Colonic mucosa (tissue), 4 donors: ENCODE measurements at regions of chr12 and their contacts with region 1.

Region 1: DNA sequence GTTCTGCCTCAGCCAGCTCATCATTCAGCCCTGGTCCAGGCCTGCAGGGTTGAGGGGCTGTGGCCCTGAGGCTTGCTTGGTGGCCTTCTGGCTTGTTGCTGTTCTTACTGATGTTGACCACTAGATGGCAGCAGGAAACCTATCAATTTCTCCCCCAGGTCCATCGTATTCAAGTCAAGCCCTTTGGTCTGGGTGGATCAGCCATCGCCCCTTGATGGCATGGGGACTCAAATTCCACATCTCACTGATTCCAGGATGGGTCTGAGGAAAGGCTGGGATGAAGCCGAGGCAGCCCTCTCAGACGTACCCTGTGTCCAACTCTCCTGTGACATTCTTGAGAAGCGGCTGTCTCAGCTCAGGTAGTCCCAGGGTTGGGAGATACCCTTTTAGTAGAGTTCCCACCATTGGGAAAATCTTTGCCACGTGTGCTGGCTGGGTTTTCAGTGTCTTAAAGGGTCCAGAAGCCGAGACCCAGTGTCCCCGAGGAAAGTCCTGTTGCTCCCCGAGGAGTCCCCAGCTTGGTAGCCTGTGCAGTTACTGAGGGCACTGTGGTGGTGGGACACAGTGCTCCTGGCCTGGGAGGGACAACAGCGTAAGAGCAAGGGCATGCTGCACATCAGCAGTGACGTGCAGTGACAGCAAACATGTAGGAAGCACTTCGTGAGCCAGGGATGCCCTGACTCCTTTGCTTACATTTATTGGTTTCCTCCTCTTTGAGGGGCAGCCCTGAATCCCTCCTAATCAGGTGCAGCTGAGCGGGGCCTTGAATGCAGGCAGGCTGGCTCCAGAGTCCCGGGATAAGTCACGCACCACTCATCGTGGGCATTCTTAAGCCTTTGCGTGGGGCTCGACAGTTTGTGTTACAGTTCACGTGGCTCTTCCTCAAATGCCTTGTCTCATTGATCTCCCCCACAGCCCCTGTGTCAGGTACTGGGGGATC is 58.6 kb downstream of the TSPAN9 start:
- DNase-seq: peak; percentile 31
- H3K4me3 ChIP-seq: no peak overlapping the region
- H3K27ac ChIP-seq: no peak overlapping the region
- H3K4me1 ChIP-seq: no peaks in the 10 kb centered on the region
- H3K27me3 ChIP-seq: no peaks in the 10 kb centered on the region
- CTCF ChIP-seq: peak; percentile 71

Region 2: DNA sequence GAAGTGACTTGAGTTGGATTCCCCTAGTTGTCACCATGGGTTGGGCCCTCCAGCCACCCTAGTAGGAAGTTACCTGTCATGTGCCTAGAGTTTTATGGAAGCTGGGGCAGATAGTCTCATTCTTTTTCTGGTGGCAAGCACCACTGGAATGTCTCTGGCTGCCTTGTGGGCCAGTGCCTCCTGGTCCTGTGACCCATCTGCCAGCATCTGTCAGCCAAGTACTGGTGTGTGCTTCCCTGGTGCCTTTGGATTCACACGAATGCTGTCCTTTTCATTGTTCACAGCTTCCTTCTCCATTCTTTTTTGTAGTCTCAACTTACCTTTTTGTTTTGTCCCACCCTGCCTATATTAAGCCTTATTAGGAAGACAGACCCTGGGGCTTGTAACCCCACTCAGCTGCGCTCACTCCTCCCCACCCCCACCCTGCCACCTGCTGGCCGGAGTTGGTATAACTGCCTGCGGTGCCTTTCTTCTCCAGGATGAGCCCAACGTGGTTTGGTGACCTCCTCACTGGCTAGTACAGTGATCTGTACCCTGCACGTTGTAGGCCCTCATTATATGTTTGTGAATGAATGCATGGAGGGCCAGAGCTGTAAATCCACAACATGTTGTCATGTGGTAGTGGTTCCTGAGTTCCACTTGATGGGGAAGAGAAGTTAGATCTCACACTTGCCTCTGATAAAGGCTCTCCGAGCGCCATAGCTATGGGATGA is 67.1 kb after region 1 on chr12:
- intact Hi-C with region 1: loop called (anchors 10 kb)
- DNase-seq: peak; percentile 65
- H3K4me3 ChIP-seq: no peak overlapping the region
- H3K27ac ChIP-seq: no peak overlapping the region
- H3K4me1 ChIP-seq: peaks cover 3% of the 10 kb centered on the region
- H3K27me3 ChIP-seq: peaks cover 24% of the 10 kb centered on the region
- CTCF ChIP-seq: peak; percentile 88

Region 3: DNA sequence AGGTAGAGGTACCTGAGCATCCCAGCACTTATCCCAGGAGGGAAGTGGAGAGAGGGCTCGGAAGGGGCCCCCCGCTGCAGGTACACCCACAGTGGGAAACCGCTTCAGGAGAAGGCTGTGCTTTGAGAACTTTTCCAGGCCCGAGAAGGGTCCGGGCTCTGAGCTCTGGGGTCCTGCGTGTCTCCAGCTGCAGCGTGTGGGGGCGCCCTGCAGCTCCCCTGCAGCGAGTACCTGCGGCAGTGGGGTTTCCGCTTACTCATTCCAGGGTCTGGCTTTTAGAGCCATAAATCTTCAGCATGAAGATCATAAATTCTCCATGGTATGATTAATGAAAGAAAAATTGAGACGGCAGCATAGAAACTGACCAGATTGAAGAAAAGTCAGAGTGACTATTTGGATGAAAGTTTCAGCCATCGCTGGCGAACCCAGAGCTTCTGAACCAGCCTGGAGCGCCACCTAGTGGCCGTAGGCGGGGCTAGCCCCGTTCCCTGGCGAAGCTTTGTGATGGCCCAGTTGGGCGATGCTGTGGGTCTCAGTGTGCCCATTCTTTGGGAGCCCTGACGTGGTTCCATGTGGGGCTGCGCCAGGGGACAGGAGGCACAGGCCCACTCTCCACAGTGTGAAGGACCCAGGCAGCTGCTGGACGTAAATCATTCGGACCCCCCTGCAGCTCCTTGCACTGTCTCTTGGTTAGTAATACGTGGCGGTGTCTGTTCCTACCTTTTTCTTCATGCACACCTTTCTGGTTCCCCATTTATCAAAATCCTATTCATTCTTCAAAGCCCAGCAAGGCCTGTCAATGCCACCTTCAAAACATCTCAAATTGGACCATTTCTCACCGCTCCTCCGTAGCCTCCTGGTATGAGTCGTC is 139.6 kb after region 1 on chr12:
- intact Hi-C with region 1: loop called (anchors 2 kb)
- DNase-seq: peak; percentile 73
- H3K4me3 ChIP-seq: no peak overlapping the region
- H3K27ac ChIP-seq: no peak overlapping the region
- H3K4me1 ChIP-seq: no peaks in the 10 kb centered on the region
- H3K27me3 ChIP-seq: no peaks in the 10 kb centered on the region
- CTCF ChIP-seq: peak; percentile 96